Esophagus muscularis mucosa (tissue), 4 donors: ENCODE measurements at regions of chr6 and their contacts with region 1.

Region 1: DNA sequence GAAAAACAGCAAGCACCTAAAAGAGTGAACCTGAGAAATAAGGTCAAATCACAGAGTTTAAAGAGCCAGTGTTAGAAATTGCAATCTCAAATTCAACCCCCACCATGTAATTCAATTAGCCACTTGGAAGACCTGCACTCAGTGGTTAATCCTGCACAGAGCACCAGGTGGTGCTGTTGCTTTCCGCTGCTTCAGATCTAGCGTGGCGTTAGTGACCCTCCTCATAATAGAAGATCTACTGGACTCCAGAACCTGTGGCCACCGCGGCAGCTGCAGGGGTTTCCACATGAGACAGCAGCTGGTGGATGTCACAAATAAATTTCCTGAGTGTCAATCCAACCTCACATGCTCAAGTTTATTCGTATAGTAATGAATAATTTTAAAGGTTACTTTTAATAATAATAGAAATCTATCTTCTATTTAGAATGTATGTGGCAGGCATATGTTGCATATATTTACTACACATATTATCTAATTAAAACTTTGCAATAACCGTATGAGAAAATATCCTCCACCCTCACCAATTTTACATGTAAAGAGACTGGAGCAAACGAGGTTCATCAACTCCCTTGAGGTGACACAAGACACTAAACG is 84.4 kb downstream of the SYNE1 start:
- DNase-seq: no peak
- H3K4me3 ChIP-seq: no peak overlapping the region
- H3K27ac ChIP-seq: no peak overlapping the region
- H3K4me1 ChIP-seq: peaks cover 0 to 3% (median 0%) of the 10 kb centered on the region in 4 donors
- H3K27me3 ChIP-seq: no peaks in the 10 kb centered on the region
- CTCF ChIP-seq: peak; percentile 79 to 91 (median 89)
- EP300 ChIP-seq: no peak
- POLR2A ChIP-seq: no peak

Region 2: GRCh38 chr6:151974061-151974617 is 578.6 kb before region 1 on chr6:
- intact Hi-C with region 1: no loop called
- DNase-seq: no peak
- H3K4me3 ChIP-seq: no peak overlapping the region
- H3K27ac ChIP-seq: no peak overlapping the region
- H3K4me1 ChIP-seq: no peaks in the 10 kb centered on the region
- H3K27me3 ChIP-seq: no peaks in the 10 kb centered on the region
- CTCF ChIP-seq: no peak
- EP300 ChIP-seq: no peak
- POLR2A ChIP-seq: no peak

Region 3: GRCh38 chr6:152110886-152111820 is 441.6 kb before region 1 on chr6:
- intact Hi-C with region 1: no loop called
- DNase-seq: peak; percentile 72
- H3K4me3 ChIP-seq: no peak overlapping the region
- H3K27ac ChIP-seq: peak overlapping the region in 1 of 4 donors; percentile 4
- H3K4me1 ChIP-seq: peaks cover 7 to 24% (median 13%) of the 10 kb centered on the region in 4 donors
- H3K27me3 ChIP-seq: no peaks in the 10 kb centered on the region
- CTCF ChIP-seq: no peak
- EP300 ChIP-seq: no peak
- POLR2A ChIP-seq: no peak

Region 4: DNA sequence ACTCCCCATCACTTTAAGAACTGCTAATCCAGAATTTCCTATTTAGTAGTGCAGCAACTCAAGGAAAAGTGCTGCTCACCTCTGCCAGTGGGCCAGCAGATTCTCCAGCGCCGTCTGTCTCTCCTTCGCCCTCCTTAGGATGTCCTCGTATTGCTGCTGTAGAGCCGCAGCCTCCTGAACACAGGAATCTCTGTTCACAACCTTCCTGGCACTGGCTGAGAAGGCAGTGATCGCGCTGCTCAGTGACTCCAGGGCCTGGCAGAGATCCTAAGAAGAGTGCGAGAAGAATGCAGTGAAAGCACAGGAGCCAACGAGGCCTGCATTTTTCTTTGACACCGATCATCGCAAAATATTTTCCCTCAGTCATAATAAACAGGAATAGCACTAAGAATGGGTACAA is 124.6 kb before region 1 on chr6:
- intact Hi-C with region 1: no loop called
- DNase-seq: no peak
- H3K4me3 ChIP-seq: peak overlapping the region in 1 of 4 donors; percentile 2
- H3K27ac ChIP-seq: no peak overlapping the region
- H3K4me1 ChIP-seq: peaks cover 0 to 10% (median 4%) of the 10 kb centered on the region in 4 donors
- H3K27me3 ChIP-seq: no peaks in the 10 kb centered on the region
- CTCF ChIP-seq: peak in 1 of 3 experiments; percentile 8
- EP300 ChIP-seq: no peak
- POLR2A ChIP-seq: no peak

Region 5: DNA sequence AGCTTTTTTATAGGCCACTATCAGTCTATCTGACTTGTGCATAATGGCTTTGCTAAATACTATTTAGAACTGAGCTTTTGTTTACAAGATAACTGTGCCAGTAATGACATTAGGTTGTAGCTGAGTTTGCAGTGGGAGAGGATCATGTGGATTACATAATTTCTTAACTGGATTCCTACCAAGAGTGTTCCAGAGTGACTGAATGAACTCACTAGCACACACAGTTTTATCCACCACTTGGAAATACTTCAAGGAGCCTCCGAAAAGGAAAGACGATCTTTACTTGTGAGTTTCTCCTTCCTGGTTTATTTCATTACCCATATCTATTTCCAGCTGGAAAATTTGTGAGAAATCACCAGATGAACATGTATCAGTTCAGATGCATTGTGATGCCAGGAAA is 95.4 kb after region 1 on chr6:
- intact Hi-C with region 1: loop called (anchors 5 kb)
- DNase-seq: no peak
- H3K4me3 ChIP-seq: no peak overlapping the region
- H3K27ac ChIP-seq: peak overlapping the region in 2 of 4 donors; percentile 47 to 48
- H3K4me1 ChIP-seq: peaks cover 0 to 32% (median 27%) of the 10 kb centered on the region in 4 donors
- H3K27me3 ChIP-seq: no peaks in the 10 kb centered on the region
- CTCF ChIP-seq: no peak
- EP300 ChIP-seq: no peak
- POLR2A ChIP-seq: no peak

Region 6: DNA sequence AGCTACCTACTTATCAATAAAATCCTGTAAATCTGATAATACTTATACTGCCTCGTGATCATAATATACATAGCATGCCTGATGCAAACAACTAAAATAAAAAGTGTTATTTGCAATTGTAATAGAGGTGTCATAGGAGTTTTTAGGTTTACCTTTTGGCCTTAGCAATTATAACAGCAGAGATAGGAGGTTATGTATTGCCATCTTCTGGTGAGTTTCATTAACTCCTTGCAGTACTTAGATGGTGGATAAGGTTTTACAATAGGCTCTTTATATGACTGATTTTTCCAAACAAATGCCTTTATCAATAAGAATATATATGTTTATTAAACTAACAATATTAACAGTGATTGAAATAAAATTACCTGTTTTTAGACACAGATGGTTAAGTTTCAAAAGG is 117.2 kb after region 1 on chr6:
- intact Hi-C with region 1: loop called (anchors 2 kb)
- DNase-seq: no peak
- H3K4me3 ChIP-seq: no peak overlapping the region
- H3K27ac ChIP-seq: no peak overlapping the region
- H3K4me1 ChIP-seq: no peaks in the 10 kb centered on the region
- H3K27me3 ChIP-seq: no peaks in the 10 kb centered on the region
- CTCF ChIP-seq: peak; percentile 46 to 49 (median 48)
- EP300 ChIP-seq: no peak
- POLR2A ChIP-seq: no peak